Activated CD8-positive, alpha-beta T cell treated with anti-CD3 and anti-CD28 coated beads, Interleukin-2, amount 10 ng/mL, durations not matched to agents 7 days and 5 days (primary cell): ENCODE measurements at regions of chr19 and their contacts with region 1.

Region 1: GRCh38 chr19:38514812-38515633 is 81.5 kb downstream of the RYR1 start:
- DNase-seq: peak; percentile 81
- ATAC-seq: peak; percentile 81
- H3K4me3 Mint-ChIP-seq: peak overlapping the region; percentile 8
- H3K27ac Mint-ChIP-seq: peak overlapping the region; percentile 49
- H3K4me1 Mint-ChIP-seq: peaks cover 30% of the 10 kb centered on the region
- H3K27me3 Mint-ChIP-seq: peaks cover 22% of the 10 kb centered on the region

Region 2: GRCh38 chr19:38255383-38256014 is 259.5 kb before region 1 on chr19:
- CTCF ChIA-PET with region 1: no interaction called
- POLR2A ChIA-PET with region 1: no interaction called
- DNase-seq: no peak
- ATAC-seq: no peak
- H3K4me3 Mint-ChIP-seq: no peak overlapping the region
- H3K27ac Mint-ChIP-seq: no peak overlapping the region
- H3K4me1 Mint-ChIP-seq: peaks cover 11% of the 10 kb centered on the region
- H3K27me3 Mint-ChIP-seq: peaks cover 18% of the 10 kb centered on the region

Region 3: DNA sequence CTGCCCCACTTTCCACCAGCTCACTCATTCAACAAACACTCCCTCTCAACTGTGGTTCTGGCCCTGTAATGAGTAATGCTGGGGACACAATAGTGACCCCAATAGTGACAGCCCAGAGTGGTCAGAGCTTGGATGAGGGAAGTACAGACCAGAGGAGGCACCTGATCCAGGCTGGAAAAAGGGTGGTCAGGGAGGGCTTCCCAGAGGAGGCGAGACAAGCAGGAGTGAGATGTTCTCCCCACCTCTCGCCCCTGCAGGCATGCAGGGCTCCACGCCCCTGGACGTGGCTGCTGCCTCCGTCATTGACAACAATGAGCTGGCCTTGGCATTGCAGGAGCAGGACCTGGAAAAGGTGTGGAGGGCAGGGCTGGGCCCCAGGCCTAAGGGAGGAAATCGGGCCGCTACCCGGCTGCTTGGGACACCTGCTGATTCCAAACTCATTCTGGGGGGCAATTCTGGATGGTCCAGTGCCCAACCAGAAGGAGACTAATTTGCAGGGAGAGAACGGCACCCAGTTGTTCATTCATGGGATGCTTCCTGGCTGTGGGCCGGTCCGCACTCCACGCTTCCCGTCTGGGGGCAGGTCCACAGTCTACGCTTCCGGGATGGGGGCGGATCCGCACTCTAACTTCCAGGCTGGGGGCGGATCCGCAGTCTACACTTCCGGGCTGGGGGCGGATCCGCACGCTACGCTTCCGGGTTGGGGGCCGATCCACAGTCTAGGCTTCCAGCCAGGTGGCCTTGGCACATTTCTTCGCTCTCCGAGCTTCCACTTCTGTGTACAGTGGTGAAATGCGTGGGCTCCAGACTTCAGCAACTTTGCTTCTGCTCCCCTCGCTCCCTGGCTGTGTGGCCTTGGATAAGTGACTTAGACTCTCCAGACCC is 18.2 kb before region 1 on chr19:
- CTCF ChIA-PET with region 1: no interaction called
- POLR2A ChIA-PET with region 1: no interaction called
- DNase-seq: no peak
- ATAC-seq: no peak
- H3K4me3 Mint-ChIP-seq: no peak overlapping the region
- H3K27ac Mint-ChIP-seq: no peak overlapping the region
- H3K4me1 Mint-ChIP-seq: peaks cover 14% of the 10 kb centered on the region
- H3K27me3 Mint-ChIP-seq: peaks cover 4% of the 10 kb centered on the region

Region 4: GRCh38 chr19:38544034-38544958 is 29.3 kb after region 1 on chr19:
- CTCF ChIA-PET with region 1: interaction called, 22 read pairs
- POLR2A ChIA-PET with region 1: no interaction called
- DNase-seq: peak; percentile 55
- ATAC-seq: peak; percentile 92
- H3K4me3 Mint-ChIP-seq: no peak overlapping the region
- H3K27ac Mint-ChIP-seq: peak overlapping the region; percentile 51
- H3K4me1 Mint-ChIP-seq: peaks cover 26% of the 10 kb centered on the region
- H3K27me3 Mint-ChIP-seq: peaks cover 3% of the 10 kb centered on the region